ENCODE measurements at regions of chr3 and their contacts with region 1.

Region 1: GRCh38 chr3:52056968-52057805 is 816 bp upstream of the DUSP7 start:
- DNase-seq: peak; percentile 99 to 100
- ATAC-seq: peak; percentile 89 to 93 (median 91)
- H3K4me3 ChIP-seq: peak overlapping the region; percentile 68
- H3K27ac ChIP-seq: peak overlapping the region; percentile 79
- H3K4me1 ChIP-seq: peaks cover 30% of the 10 kb centered on the region
- H3K27me3 ChIP-seq: no peaks in the 10 kb centered on the region
- CTCF ChIP-seq: no peak

Region 2: GRCh38 chr3:51941798-51942602 is 115.2 kb before region 1 on chr3 and contains the starts of genes PARP3 and RRP9:
- intact Hi-C with region 1: loop called in 1 of 2 experiments (anchors 5 kb)
- DNase-seq: peak; percentile 100
- ATAC-seq: peak; percentile 91 to 93 (median 92)
- H3K4me3 ChIP-seq: peak within 1 kb of the TSS; percentile 97
- H3K27ac ChIP-seq: peak within 1 kb of the TSS; percentile 97
- H3K4me1 ChIP-seq: peaks cover 26% of the 10 kb centered on the region
- H3K27me3 ChIP-seq: no peaks in the 10 kb centered on the region
- CTCF ChIP-seq: peak; percentile 100
- total RNA-seq, gene PARP3: 10.0 to 15.8 (median 13.1) TPM
- total RNA-seq, gene RRP9: 19.9 to 28.2 (median 26.3) TPM

Region 3: DNA sequence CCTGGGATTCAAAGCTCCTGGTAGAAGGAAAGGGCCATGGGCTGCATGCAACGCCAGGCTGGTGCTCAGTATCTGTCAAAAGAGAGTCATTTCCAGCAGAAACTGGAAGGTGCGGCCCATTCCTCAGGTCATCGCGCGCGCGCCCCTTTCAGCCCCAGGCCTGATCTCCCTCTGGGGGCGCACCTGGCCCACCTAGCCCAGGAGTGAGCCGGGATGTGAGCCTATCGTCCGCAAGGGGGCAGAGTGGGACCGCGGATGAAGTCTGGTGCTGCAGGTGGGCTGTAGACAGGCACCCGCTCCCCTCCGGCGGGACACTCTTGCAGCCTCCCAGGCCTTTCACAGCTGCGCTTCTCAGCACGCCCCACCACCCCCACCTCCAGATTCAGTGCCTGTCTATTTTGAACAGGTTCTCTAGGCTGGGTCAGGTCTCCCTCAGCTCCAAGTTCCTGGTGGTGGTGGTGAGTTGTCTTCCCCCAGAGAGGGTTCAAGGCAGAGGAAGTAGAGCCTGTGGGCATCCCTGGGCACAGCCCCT is 55.7 kb before region 1 on chr3:
- intact Hi-C with region 1: loop called (anchors 2 to 5 kb)
- DNase-seq: peak; percentile 77 to 89
- ATAC-seq: peak; percentile 81 to 86 (median 84)
- H3K4me3 ChIP-seq: no peak overlapping the region
- H3K27ac ChIP-seq: no peak overlapping the region
- H3K4me1 ChIP-seq: peaks cover 26% of the 10 kb centered on the region
- H3K27me3 ChIP-seq: no peaks in the 10 kb centered on the region
- CTCF ChIP-seq: peak; percentile 92

Region 4: DNA sequence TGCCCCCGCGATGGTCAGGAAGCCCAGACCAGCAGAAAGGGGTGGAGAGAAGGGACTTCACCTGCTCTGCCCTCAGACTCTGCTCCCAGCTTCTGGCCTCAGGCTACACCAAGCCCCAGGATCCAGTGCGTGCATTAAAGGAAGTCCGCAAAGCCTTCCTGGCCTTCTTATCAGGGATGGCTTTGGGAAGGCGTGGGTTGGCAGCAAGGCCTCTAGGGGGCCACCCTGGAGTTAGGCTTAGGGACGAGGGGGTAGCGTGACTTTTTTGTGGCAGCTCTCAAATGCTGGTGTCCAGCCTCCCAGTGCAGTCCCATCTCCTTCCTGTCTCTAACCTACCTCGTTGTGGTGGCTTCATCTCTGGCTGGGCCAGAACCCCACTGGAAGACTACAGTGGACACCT is 42.6 kb before region 1 on chr3:
- intact Hi-C with region 1: loop called in 1 of 2 experiments (anchors 5 kb)
- DNase-seq: peak in 1 of 2 donors; percentile 16
- ATAC-seq: no peak
- H3K4me3 ChIP-seq: no peak overlapping the region
- H3K27ac ChIP-seq: peak overlapping the region; percentile 36
- H3K4me1 ChIP-seq: peaks cover 53% of the 10 kb centered on the region
- H3K27me3 ChIP-seq: no peaks in the 10 kb centered on the region
- CTCF ChIP-seq: no peak

Region 5: GRCh38 chr3:52023860-52024764 is 33.1 kb before region 1 on chr3:
- intact Hi-C with region 1: loop called in 1 of 2 experiments (anchors 2 kb)
- DNase-seq: no peak
- ATAC-seq: peak in 1 of 4 donors; percentile 13
- H3K4me3 ChIP-seq: peak overlapping the region; percentile 55
- H3K27ac ChIP-seq: peak overlapping the region; percentile 92
- H3K4me1 ChIP-seq: peaks cover 75% of the 10 kb centered on the region
- H3K27me3 ChIP-seq: no peaks in the 10 kb centered on the region
- CTCF ChIP-seq: no peak

Region 6: DNA sequence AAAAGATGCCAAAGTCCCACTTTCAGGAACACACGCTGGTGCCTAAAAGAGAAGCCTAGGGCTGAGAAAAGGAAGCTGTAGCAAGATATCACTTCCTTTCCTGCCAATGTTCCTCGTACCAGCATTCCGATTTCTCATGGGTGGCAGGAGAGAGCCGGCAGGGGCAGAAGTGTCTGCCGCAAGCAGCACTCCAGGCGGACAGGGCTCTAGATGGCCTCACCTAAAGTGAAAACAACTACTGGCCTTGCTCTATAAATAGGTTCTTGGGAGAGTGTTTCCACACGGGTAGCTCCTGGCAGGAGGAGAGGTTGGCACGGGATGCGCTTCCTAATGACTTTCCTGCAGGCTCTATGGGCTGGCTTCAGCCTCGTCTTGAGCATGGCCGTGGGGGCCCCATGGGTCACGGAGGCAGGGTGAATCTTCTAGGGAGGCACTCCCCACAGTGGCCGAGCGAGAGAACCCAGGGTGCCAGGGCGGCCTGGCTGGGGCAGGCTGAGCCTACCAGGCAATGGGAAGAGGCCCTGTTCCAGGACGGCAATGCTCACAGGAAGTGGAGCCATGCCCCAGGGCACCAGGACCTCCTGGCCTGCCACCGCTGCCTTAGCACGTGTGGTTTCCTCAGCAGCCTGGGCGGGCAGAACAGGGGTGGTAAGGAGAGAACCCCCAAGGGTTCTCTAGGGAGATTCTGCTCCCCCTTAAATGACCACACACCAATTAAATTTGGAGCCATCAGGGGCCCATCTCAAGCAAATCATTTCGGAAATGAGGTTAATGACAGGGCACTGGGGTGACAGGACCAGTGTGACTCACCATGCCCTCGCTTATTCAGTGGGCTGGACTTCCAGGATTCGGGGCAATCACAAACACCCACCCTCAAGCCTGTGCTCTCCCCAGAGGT is 13.8 kb after region 1 on chr3:
- intact Hi-C with region 1: no loop called
- DNase-seq: peak; percentile 55 to 87
- ATAC-seq: peak; percentile 90 to 97 (median 96)
- H3K4me3 ChIP-seq: peak overlapping the region; percentile 9
- H3K27ac ChIP-seq: peak overlapping the region; percentile 91
- H3K4me1 ChIP-seq: peaks cover 22% of the 10 kb centered on the region
- H3K27me3 ChIP-seq: no peaks in the 10 kb centered on the region
- CTCF ChIP-seq: peak; percentile 31

Region 7: GRCh38 chr3:52144034-52144795 is 87.0 kb after region 1 on chr3:
- intact Hi-C with region 1: loop called (anchors 2 to 5 kb)
- DNase-seq: peak; percentile 83 to 90
- ATAC-seq: peak; percentile 75 to 83 (median 79)
- H3K4me3 ChIP-seq: no peak overlapping the region
- H3K27ac ChIP-seq: no peak overlapping the region
- H3K4me1 ChIP-seq: peaks cover 19% of the 10 kb centered on the region
- H3K27me3 ChIP-seq: no peaks in the 10 kb centered on the region
- CTCF ChIP-seq: peak; percentile 97